Activated naive CD4-positive, alpha-beta T cell treated with anti-CD3 and anti-CD28 coated beads for 36 hours (primary cell): ENCODE measurements at regions of chr2 and their contacts with region 1.

Region 1: GRCh38 chr2:70553584-70554337 is at the start of gene TGFA:
- DNase-seq: peak; percentile 77
- H3K4me3 Mint-ChIP-seq: peak within 1 kb of the TSS; percentile 78
- H3K27ac Mint-ChIP-seq: peak within 1 kb of the TSS; percentile 23
- H3K4me1 Mint-ChIP-seq: peaks cover 14% of the 10 kb centered on the region
- H3K27me3 Mint-ChIP-seq: peaks cover 11% of the 10 kb centered on the region
- total RNA-seq, gene TGFA: 0.33 to 0.64 TPM

Region 2: DNA sequence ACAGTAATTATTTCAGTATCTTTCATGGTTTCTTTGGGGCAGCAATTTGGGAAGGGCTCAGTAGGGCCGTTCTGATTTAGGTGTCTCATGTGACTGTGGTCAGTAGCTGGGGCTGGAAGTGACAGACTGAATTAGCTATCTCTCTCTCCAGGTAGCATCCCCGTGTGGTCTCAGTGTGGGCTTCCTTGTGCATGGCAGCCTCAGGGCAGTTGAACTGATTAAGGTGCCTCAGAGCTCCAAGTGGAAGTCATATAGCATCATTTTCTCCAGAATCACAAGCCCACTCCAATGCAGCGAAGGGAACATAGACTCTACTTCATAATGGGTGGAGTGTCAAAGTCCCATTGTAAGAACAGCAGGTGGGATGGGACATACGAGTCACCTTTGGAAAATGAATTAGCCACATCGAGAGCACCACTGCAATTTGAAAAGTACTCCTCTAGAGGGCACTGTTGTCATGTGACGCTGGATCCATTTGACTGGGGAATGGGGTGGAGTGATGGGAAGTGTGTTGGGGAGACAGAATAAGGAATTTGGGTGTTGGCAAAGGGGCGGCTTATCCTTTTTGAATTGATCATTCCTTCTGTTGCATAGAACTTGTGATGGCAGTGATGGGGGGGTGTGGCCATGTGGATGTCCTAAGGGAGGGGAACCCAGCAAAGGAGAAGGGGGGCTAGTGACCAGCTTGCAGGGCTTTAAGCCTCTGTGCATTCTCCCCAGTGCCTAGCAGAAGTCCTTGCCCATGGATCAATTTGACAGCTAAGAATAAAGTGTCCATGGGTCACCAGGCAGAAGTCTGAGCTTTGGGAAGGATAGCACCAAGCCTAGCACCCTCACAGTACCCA is 212.6 kb before region 1 on chr2:
- CTCF ChIA-PET with region 1: interaction called, 7 read pairs
- intact Hi-C with region 1: loop called (anchors 1 kb)
- DNase-seq: peak; percentile 60
- H3K4me3 Mint-ChIP-seq: no peak overlapping the region
- H3K27ac Mint-ChIP-seq: no peak overlapping the region
- H3K4me1 Mint-ChIP-seq: peaks cover 5% of the 10 kb centered on the region
- H3K27me3 Mint-ChIP-seq: no peaks in the 10 kb centered on the region

Region 3: GRCh38 chr2:70440621-70441020 is 113.1 kb before region 1 on chr2:
- CTCF ChIA-PET with region 1: no interaction called
- intact Hi-C with region 1: loop called (anchors 2 kb)
- DNase-seq: peak; percentile 62
- H3K4me3 Mint-ChIP-seq: no peak overlapping the region
- H3K27ac Mint-ChIP-seq: peak overlapping the region; percentile 83
- H3K4me1 Mint-ChIP-seq: peaks cover 28% of the 10 kb centered on the region
- H3K27me3 Mint-ChIP-seq: no peaks in the 10 kb centered on the region

Region 4: GRCh38 chr2:70472221-70472890 is 81.4 kb before region 1 on chr2:
- CTCF ChIA-PET with region 1: no interaction called
- intact Hi-C with region 1: loop called (anchors 5 kb)
- DNase-seq: no peak
- H3K4me3 Mint-ChIP-seq: no peak overlapping the region
- H3K27ac Mint-ChIP-seq: no peak overlapping the region
- H3K4me1 Mint-ChIP-seq: peaks cover 46% of the 10 kb centered on the region
- H3K27me3 Mint-ChIP-seq: no peaks in the 10 kb centered on the region

Region 5: GRCh38 chr2:70616168-70616694 is 62.5 kb after region 1 on chr2:
- CTCF ChIA-PET with region 1: interaction called, 14 read pairs
- intact Hi-C with region 1: loop called (anchors 1 kb)
- DNase-seq: no peak
- H3K4me3 Mint-ChIP-seq: no peak overlapping the region
- H3K27ac Mint-ChIP-seq: no peak overlapping the region
- H3K4me1 Mint-ChIP-seq: no peaks in the 10 kb centered on the region
- H3K27me3 Mint-ChIP-seq: no peaks in the 10 kb centered on the region

Region 6: DNA sequence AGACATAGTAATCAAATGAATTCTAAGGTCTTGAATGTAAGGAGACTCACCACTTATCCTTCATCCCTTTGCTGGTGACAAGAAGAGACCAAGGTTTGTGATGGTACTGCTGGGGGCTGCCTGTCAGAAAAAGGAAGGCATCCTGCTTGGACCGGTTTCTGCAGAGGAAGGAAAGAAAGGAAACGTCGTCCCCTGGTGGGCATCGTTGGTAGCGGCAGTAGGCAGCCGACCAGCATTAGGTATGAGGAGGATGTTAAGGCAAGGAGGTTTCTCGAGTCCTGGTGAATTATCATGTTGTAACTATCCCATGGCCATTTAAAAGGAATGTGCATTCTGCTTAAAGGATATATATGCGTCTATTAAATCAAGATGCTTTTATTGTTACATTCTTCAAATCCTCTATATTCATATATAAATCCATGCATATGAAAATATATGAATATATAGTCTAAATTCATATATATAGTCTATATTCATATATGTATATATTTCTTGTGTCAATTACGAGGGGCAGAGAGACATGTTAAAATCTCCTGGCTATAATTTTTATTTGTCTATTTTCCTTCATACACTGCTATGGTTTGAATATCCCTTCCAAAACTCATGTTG is 94.2 kb after region 1 on chr2:
- CTCF ChIA-PET with region 1: interaction called, 5 read pairs
- intact Hi-C with region 1: loop called (anchors 1 kb)
- DNase-seq: peak; percentile 88
- H3K4me3 Mint-ChIP-seq: no peak overlapping the region
- H3K27ac Mint-ChIP-seq: no peak overlapping the region
- H3K4me1 Mint-ChIP-seq: no peaks in the 10 kb centered on the region
- H3K27me3 Mint-ChIP-seq: no peaks in the 10 kb centered on the region